Body of pancreas (tissue), 4 donors: ENCODE measurements at regions of chr2 and their contacts with region 1.

Region 1: GRCh38 chr2:126776692-126777619 is 121.0 kb downstream of the GYPC start:
- DNase-seq: peak; percentile 81 to 85 (median 84)
- ATAC-seq: peak; percentile 90
- H3K4me3 ChIP-seq: peak overlapping the region in 1 of 2 donors; percentile 35
- H3K27ac ChIP-seq: peak overlapping the region; percentile 58 to 80 (median 76)
- H3K4me1 ChIP-seq: no peaks in the 10 kb centered on the region
- H3K27me3 ChIP-seq: no peaks in the 10 kb centered on the region
- CTCF ChIP-seq: peak; percentile 93 to 96 (median 95)
- POLR2A ChIP-seq: peak in 2 of 3 donors; percentile 16 to 55

Region 2: GRCh38 chr2:126534478-126534877 is 242.5 kb before region 1 on chr2:
- intact Hi-C with region 1: loop called (anchors 10 kb)
- DNase-seq: no peak
- ATAC-seq: no peak
- H3K4me3 ChIP-seq: no peak overlapping the region
- H3K27ac ChIP-seq: no peak overlapping the region
- H3K4me1 ChIP-seq: no peaks in the 10 kb centered on the region
- H3K27me3 ChIP-seq: no peaks in the 10 kb centered on the region
- CTCF ChIP-seq: no peak
- POLR2A ChIP-seq: no peak